ENCODE measurements at regions of chr5 and their contacts with region 1.

Region 1: GRCh38 chr5:16483361-16483760 is 17.8 kb upstream of the ZNF622 start:
- DNase-seq: no peak
- H3K4me3 Mint-ChIP-seq: no peak overlapping the region
- H3K27ac Mint-ChIP-seq: no peak overlapping the region
- H3K4me1 Mint-ChIP-seq: peaks cover 24% of the 10 kb centered on the region
- H3K27me3 Mint-ChIP-seq: no peaks in the 10 kb centered on the region
- CTCF ChIP-seq: no peak

Region 2: GRCh38 chr5:16666883-16667398 is 183.6 kb after region 1 on chr5:
- CTCF ChIA-PET with region 1: interaction called, 11 read pairs
- intact Hi-C with region 1: loop called (anchors 2 kb)
- DNase-seq: no peak
- H3K4me3 Mint-ChIP-seq: no peak overlapping the region
- H3K27ac Mint-ChIP-seq: peak overlapping the region; percentile 25
- H3K4me1 Mint-ChIP-seq: no peaks in the 10 kb centered on the region
- H3K27me3 Mint-ChIP-seq: no peaks in the 10 kb centered on the region
- CTCF ChIP-seq: no peak

Measured in Calu3 (cell line).